Gastrocnemius medialis (tissue), 4 donors: ENCODE measurements at regions of chr7 and their contacts with region 1.

Region 1: DNA sequence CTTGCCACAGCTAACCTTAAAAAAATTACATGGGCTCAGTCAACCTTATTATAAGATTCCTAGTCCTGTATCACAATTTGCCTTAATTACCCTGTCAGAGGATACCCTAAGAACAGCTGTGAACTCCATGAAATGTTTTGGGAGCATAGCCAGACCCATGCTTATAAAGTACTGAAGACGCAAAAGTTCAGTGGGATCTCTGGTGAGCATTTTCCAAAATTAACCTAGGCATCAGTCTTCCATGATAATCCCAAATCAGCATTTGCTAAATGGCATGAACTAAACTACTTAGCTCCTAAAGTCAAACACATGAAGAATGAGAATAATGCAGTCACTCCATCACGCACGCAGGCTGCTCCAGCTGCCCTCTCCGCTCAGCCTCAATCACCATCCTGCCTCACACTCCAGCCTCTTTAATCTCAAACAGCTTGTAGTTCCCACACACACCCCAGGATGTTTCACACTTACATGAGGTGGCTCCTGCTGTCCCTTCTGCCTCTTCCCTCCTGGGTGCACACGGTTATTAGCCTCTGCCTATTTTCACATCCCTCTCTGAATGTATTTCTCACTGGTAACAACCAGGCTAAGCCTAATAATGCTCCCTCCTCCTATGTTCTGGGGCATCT is 15.3 kb downstream of the IGF2BP3 start:
- DNase-seq: no peak
- ATAC-seq: no peak
- H3K4me3 ChIP-seq: no peak overlapping the region
- H3K27ac ChIP-seq: no peak overlapping the region
- H3K4me1 ChIP-seq: no peaks in the 10 kb centered on the region
- H3K27me3 ChIP-seq: peaks cover 13 to 22% (median 16%) of the 10 kb centered on the region in 3 donors
- CTCF ChIP-seq: no peak
- POLR2A ChIP-seq: no peak

Region 2: GRCh38 chr7:23261843-23262452 is 193.0 kb before region 1 on chr7:
- in situ Hi-C with region 1: loop called in 1 of 4 experiments (anchors 10 kb)
- intact Hi-C with region 1: no loop called
- DNase-seq: peak in 1 of 2 donors; percentile 13
- ATAC-seq: peak in 1 of 2 donors; percentile 78
- H3K4me3 ChIP-seq: no peak overlapping the region
- H3K27ac ChIP-seq: no peak overlapping the region
- H3K4me1 ChIP-seq: no peaks in the 10 kb centered on the region
- H3K27me3 ChIP-seq: no peaks in the 10 kb centered on the region
- CTCF ChIP-seq: peak; percentile 43 to 76 (median 49)
- POLR2A ChIP-seq: no peak